HCT116 (cell line): ENCODE measurements at regions of chr19 and their contacts with region 1.

Region 1: GRCh38 chr19:29844891-29845572 is 33.2 kb downstream of the CCNE1 start:
- DNase-seq: peak; percentile 83
- ATAC-seq: peak; percentile 81
- H3K4me3 ChIP-seq: peak overlapping the region; percentile 67 to 69
- H3K27ac ChIP-seq: peak overlapping the region; percentile 83
- H3K4me1 ChIP-seq: peaks cover 26 to 38% of the 10 kb centered on the region in 2 experiments
- H3K27me3 ChIP-seq: no peaks in the 10 kb centered on the region
- CTCF ChIP-seq: no peak
- POLR2A ChIP-seq: peak; percentile 4
- RAD21 ChIP-seq: no peak

Region 2: GRCh38 chr19:29771708-29772414 is 73.2 kb before region 1 on chr19:
- CTCF ChIA-PET with region 1: no interaction called
- POLR2A ChIA-PET with region 1: no interaction called
- RAD21 ChIA-PET with region 1: no interaction called
- intact Hi-C with region 1: no loop called
- DNase-seq: peak; percentile 43
- ATAC-seq: peak; percentile 96
- H3K4me3 ChIP-seq: no peak overlapping the region
- H3K27ac ChIP-seq: no peak overlapping the region
- H3K4me1 ChIP-seq: peaks cover 3 to 8% of the 10 kb centered on the region in 2 experiments; a peak in 2 of 4 replicates
- H3K27me3 ChIP-seq: no peaks in the 10 kb centered on the region
- CTCF ChIP-seq: peak; percentile 31 to 89 (median 74); a peak in 4 of 6 replicates
- POLR2A ChIP-seq: no peak
- RAD21 ChIP-seq: peak; percentile 58

Region 3: GRCh38 chr19:29785955-29786589 is 59.0 kb before region 1 on chr19:
- CTCF ChIA-PET with region 1: no interaction called
- POLR2A ChIA-PET with region 1: no interaction called
- RAD21 ChIA-PET with region 1: no interaction called
- intact Hi-C with region 1: no loop called
- DNase-seq: peak; percentile 6
- ATAC-seq: peak; percentile 83
- H3K4me3 ChIP-seq: no peak overlapping the region
- H3K27ac ChIP-seq: no peak overlapping the region
- H3K4me1 ChIP-seq: no peaks in the 10 kb centered on the region
- H3K27me3 ChIP-seq: no peaks in the 10 kb centered on the region
- CTCF ChIP-seq: peak; percentile 29 to 73 (median 69); a peak in 5 of 6 replicates
- POLR2A ChIP-seq: no peak
- RAD21 ChIP-seq: peak; percentile 40; the same call in 1 of the 2 replicates

Region 4: GRCh38 chr19:29811125-29812079 is 33.6 kb before region 1 on chr19 and contains the start of gene CCNE1:
- CTCF ChIA-PET with region 1: interaction called, 3 read pairs
- POLR2A ChIA-PET with region 1: no interaction called
- RAD21 ChIA-PET with region 1: interaction called in 1 of 2 experiments, 5 read pairs
- intact Hi-C with region 1: loop called (anchors 2 kb)
- DNase-seq: peak; percentile 43
- ATAC-seq: peak; percentile 93
- H3K4me3 ChIP-seq: peak within 1 kb of the TSS; percentile 62 to 73
- H3K27ac ChIP-seq: peak within 1 kb of the TSS; percentile 80
- H3K4me1 ChIP-seq: peaks cover 7 to 23% of the 10 kb centered on the region in 2 experiments; a peak in 3 of 4 replicates
- H3K27me3 ChIP-seq: no peaks in the 10 kb centered on the region
- CTCF ChIP-seq: no peak
- POLR2A ChIP-seq: peak; percentile 8
- RAD21 ChIP-seq: no peak
- total RNA-seq, gene CCNE1: 29.3 TPM

Region 5: DNA sequence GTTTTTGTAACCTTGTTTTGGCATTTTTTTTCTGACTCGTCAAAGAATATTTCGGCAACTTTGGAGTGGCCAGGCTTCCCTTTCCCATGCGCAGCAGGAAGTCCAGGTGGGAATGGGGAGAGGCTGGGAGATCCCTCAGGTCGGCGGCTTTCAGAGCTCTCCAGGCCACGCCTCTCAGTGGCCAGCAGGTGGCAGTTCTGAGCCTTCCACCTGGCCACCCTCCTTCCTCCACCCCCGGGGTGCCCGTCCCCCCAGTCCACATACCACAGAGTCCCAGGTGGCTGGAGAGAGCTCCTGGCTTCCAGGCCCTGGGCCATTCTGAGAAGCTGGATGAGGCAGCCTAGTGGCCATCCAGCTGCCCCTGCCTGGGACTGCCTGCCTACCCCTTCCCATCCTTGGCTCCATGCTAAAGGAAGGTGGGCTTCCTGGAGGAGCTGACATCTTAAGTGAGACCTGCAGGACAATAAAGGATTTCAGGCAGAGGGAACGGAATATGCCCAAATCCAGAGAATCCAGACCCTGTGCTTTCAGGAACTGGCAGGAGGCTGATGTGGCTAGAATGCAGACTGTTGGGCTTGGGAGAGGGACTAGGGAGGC is 13.1 kb after region 1 on chr19:
- CTCF ChIA-PET with region 1: interaction called, 30 read pairs
- POLR2A ChIA-PET with region 1: interaction called, 3 read pairs
- RAD21 ChIA-PET with region 1: interaction called in 1 of 2 experiments, 3 read pairs
- intact Hi-C with region 1: no loop called
- DNase-seq: no peak
- ATAC-seq: peak; percentile 91
- H3K4me3 ChIP-seq: no peak overlapping the region
- H3K27ac ChIP-seq: no peak overlapping the region
- H3K4me1 ChIP-seq: peaks cover 2 to 17% of the 10 kb centered on the region in 2 experiments; a peak in 3 of 4 replicates
- H3K27me3 ChIP-seq: no peaks in the 10 kb centered on the region
- CTCF ChIP-seq: peak; percentile 25 to 91 (median 82); a peak in 5 of 6 replicates
- POLR2A ChIP-seq: no peak
- RAD21 ChIP-seq: peak; percentile 54